GM12878 (cell line): ENCODE measurements at regions of chr17 and their contacts with region 1.

Region 1: GRCh38 chr17:47970704-47971463 is at the start of gene CDK5RAP3:
- DNase-seq: peak; percentile 97
- ATAC-seq: peak; percentile 98
- H3K4me3 ChIP-seq: peak within 1 kb of the TSS; percentile 92
- H3K27ac ChIP-seq: peak within 1 kb of the TSS; percentile 83
- H3K4me1 ChIP-seq: peaks cover 15% of the 10 kb centered on the region
- H3K27me3 ChIP-seq: no peaks in the 10 kb centered on the region
- CTCF ChIP-seq: peak; percentile 97 to 100 (median 99); a peak in 5 of 6 replicates
- EP300 ChIP-seq: no peak
- POLR2A ChIP-seq: peak; percentile 97
- RAD21 ChIP-seq: peak; percentile 45
- polyA plus RNA-seq, gene CDK5RAP3: 69.4 to 160 TPM

Region 2: DNA sequence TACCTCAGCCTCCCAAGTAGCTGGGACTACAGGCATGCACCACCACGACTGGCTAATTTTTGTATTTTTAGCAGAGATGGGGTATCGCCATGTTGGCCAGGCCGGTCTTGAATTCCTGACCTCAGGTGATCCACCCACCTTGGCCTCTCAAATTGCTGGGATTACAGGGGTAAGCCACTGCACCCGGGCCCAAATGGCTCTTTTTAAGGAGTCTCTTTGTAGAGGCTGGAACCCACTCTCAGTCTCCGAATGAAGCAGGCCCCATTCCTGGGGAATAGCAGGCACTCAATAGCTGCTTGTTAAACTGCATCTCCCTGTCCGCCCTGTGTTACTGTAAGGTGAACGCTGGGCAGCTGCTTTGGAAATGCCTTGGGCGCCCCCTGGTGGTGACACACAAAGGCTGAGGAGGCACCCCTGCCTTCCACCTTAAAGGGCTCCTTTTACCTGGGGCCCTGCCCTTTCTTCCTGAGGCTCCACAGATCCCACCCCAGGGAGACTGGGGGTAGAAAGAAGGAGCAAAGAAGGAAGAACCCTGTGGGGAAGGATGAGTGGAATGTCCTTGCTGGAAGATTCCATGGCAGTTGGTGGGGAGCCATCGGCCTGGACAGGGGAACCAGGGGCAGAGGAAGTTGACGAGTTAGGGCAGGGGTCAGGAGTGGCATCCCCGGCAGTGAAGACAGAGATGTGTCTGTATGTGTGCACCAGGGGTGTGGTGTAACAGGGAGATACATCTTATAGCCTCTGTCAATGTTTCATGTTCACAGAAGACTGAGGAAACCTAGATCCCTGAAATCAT is 81.0 kb before region 1 on chr17:
- CTCF ChIA-PET with region 1: interaction called, 14 read pairs
- POLR2A ChIA-PET with region 1: interaction called, 14 read pairs
- RAD21 ChIA-PET with region 1: interaction called, 19 read pairs
- SMC1A ChIA-PET with region 1: interaction called, 11 read pairs
- in situ Hi-C with region 1: no loop called
- intact Hi-C with region 1: loop called (anchors 1 kb)
- DNase-seq: no peak
- ATAC-seq: peak; percentile 99
- H3K4me3 ChIP-seq: no peak overlapping the region
- H3K27ac ChIP-seq: no peak overlapping the region
- H3K4me1 ChIP-seq: peaks cover 12% of the 10 kb centered on the region
- H3K27me3 ChIP-seq: no peaks in the 10 kb centered on the region
- CTCF ChIP-seq: peak; percentile 91 to 97 (median 96)
- EP300 ChIP-seq: no peak
- POLR2A ChIP-seq: no peak
- RAD21 ChIP-seq: peak; percentile 96

Region 3: GRCh38 chr17:47895856-47896671 is 74.8 kb before region 1 on chr17 and contains the start of gene SP2:
- CTCF ChIA-PET with region 1: interaction called, 14 read pairs
- POLR2A ChIA-PET with region 1: interaction called, 14 read pairs
- RAD21 ChIA-PET with region 1: interaction called, 19 read pairs
- SMC1A ChIA-PET with region 1: interaction called, 11 read pairs
- in situ Hi-C with region 1: no loop called
- intact Hi-C with region 1: loop called (anchors 1 kb)
- DNase-seq: peak; percentile 100
- ATAC-seq: peak; percentile 94
- H3K4me3 ChIP-seq: peak within 1 kb of the TSS; percentile 95
- H3K27ac ChIP-seq: peak within 1 kb of the TSS; percentile 92
- H3K4me1 ChIP-seq: peaks cover 16% of the 10 kb centered on the region
- H3K27me3 ChIP-seq: no peaks in the 10 kb centered on the region
- CTCF ChIP-seq: no peak; a peak in 2 of 6 replicates
- EP300 ChIP-seq: no peak
- POLR2A ChIP-seq: peak; percentile 80
- RAD21 ChIP-seq: no peak
- polyA plus RNA-seq, gene SP2: 1.2 to 1.9 TPM

Region 4: DNA sequence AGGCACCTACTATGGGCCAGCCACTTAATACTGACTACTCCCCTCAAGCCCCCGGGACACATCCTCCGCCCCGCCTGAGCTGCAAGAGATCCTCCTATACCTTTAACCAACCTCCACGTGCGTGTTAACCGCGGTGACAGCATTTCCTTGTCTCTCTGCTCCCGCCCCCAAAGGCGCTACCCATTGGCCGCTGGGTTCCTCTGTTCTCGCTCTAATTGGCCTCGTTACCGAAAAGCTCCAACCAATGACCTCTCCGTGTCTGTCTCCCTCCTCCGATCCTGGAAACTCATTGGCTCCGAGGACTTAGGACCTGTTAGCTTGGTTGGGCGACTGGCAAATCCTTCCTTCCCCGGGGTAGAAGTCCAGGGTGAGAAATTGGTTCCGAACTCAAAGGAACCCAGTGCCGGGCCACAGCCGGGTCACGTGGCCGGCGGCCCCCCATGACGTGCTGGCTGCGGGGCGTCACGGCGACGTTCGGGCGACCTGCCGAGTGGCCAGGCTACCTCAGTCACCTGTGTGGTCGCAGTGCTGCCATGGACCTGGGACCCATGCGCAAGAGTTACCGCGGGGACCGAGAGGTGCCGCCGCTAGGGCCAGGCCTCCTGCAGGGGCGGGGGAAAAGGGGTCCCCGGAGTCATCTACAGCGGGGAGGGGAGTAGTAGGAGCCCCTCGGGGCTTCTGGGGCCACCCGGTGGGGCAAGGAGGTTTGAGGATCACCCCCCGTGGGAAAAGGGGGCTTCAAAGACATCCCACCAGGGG is 29.5 kb before region 1 on chr17 and contains the start of gene PNPO:
- CTCF ChIA-PET with region 1: interaction called, 463 read pairs
- POLR2A ChIA-PET with region 1: interaction called, 55 read pairs
- RAD21 ChIA-PET with region 1: interaction called, 123 read pairs
- SMC1A ChIA-PET with region 1: interaction called, 139 read pairs
- in situ Hi-C with region 1: no loop called
- intact Hi-C with region 1: no loop called
- DNase-seq: peak; percentile 97
- ATAC-seq: peak; percentile 95
- H3K4me3 ChIP-seq: peak within 1 kb of the TSS; percentile 91
- H3K27ac ChIP-seq: peak within 1 kb of the TSS; percentile 86
- H3K4me1 ChIP-seq: peaks cover 48% of the 10 kb centered on the region
- H3K27me3 ChIP-seq: no peaks in the 10 kb centered on the region
- CTCF ChIP-seq: no peak
- EP300 ChIP-seq: 0 out of 4 replicates have a peak, but pooled peaks of 1 of the 2 experiments have one; percentile 12
- POLR2A ChIP-seq: peak; percentile 79
- RAD21 ChIP-seq: no peak
- polyA plus RNA-seq, gene PNPO: 13.9 to 32.3 TPM

Region 5: GRCh38 chr17:47957591-47958428 is 13.1 kb before region 1 on chr17 and contains the start of gene PRR15L:
- CTCF ChIA-PET with region 1: interaction called, 51 read pairs
- POLR2A ChIA-PET with region 1: interaction called, 39 read pairs
- RAD21 ChIA-PET with region 1: interaction called, 8 read pairs
- SMC1A ChIA-PET with region 1: interaction called, 139 read pairs
- in situ Hi-C with region 1: no loop called
- intact Hi-C with region 1: no loop called
- DNase-seq: no peak
- ATAC-seq: no peak
- H3K4me3 ChIP-seq: no peak within 1 kb of the TSS
- H3K27ac ChIP-seq: no peak within 1 kb of the TSS
- H3K4me1 ChIP-seq: no peaks in the 10 kb centered on the region
- H3K27me3 ChIP-seq: no peaks in the 10 kb centered on the region
- CTCF ChIP-seq: no peak
- EP300 ChIP-seq: no peak
- POLR2A ChIP-seq: no peak
- RAD21 ChIP-seq: no peak
- polyA plus RNA-seq, gene PRR15L: not detected

Region 6: GRCh38 chr17:48002266-48002915 is 31.5 kb after region 1 on chr17:
- CTCF ChIA-PET with region 1: interaction called, 47 read pairs
- POLR2A ChIA-PET with region 1: interaction called, 11 read pairs
- RAD21 ChIA-PET with region 1: interaction called, 8 read pairs
- SMC1A ChIA-PET with region 1: interaction called, 5 read pairs
- in situ Hi-C with region 1: no loop called
- intact Hi-C with region 1: no loop called
- DNase-seq: peak; percentile 75
- ATAC-seq: peak; percentile 85
- H3K4me3 ChIP-seq: no peak overlapping the region
- H3K27ac ChIP-seq: peak overlapping the region; percentile 85
- H3K4me1 ChIP-seq: peaks cover 49% of the 10 kb centered on the region
- H3K27me3 ChIP-seq: no peaks in the 10 kb centered on the region
- CTCF ChIP-seq: no peak
- EP300 ChIP-seq: peak; percentile 47 to 77; a peak in 2 of 4 replicates
- POLR2A ChIP-seq: no peak
- RAD21 ChIP-seq: no peak

Region 7: DNA sequence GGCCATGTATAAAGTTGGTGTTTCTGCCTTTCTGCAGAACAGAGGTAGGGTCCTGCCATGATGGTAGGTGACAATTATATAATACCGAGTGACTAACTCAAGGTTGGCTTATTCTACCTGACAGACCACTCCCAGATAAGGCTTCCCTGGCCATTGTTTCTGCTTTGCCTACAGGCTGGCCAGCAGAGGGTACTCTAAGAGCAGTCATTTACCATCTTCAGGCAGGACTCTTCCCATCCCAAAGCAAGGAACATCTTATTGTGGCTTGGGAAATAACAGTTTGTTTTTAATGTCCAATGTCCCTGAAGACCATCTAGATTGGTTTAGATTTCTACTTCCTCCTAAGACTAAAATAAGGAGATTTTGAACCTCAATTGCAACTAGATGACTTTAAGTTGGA is 210.8 kb after region 1 on chr17:
- CTCF ChIA-PET with region 1: no interaction called
- POLR2A ChIA-PET with region 1: no interaction called
- RAD21 ChIA-PET with region 1: no interaction called
- SMC1A ChIA-PET with region 1: no interaction called
- in situ Hi-C with region 1: no loop called
- intact Hi-C with region 1: no loop called
- DNase-seq: no peak
- ATAC-seq: no peak
- H3K4me3 ChIP-seq: no peak overlapping the region
- H3K27ac ChIP-seq: no peak overlapping the region
- H3K4me1 ChIP-seq: peaks cover 6% of the 10 kb centered on the region
- H3K27me3 ChIP-seq: no peaks in the 10 kb centered on the region
- CTCF ChIP-seq: peak in 2 of 3 experiments; percentile 28 to 31; a peak in 3 of 6 replicates
- EP300 ChIP-seq: no peak
- POLR2A ChIP-seq: no peak
- RAD21 ChIP-seq: no peak; the same call in 1 of the 2 replicates

Region 8: DNA sequence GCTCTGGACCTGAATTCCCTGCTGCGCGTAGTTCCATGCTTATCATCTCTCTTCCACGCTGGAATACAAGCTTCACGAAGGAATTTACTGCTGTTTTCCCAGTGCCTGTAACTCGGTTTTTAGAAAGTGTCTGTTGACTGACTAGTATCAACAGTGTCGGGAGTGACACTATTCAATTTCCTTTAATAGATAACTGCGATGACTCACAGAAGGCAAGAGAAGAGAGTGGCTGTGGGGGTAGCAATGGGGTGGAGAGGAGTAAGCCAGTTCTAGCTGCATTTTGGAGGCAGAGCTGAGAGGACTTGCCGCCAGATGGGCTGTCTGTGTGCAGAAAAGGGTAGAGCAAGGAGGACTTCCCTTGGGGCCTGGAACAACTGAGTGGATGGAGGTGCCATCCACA is 1186.9 kb after region 1 on chr17:
- CTCF ChIA-PET with region 1: no interaction called
- POLR2A ChIA-PET with region 1: no interaction called
- RAD21 ChIA-PET with region 1: no interaction called
- SMC1A ChIA-PET with region 1: no interaction called
- in situ Hi-C with region 1: no loop called
- intact Hi-C with region 1: no loop called
- DNase-seq: no peak
- ATAC-seq: no peak
- H3K4me3 ChIP-seq: no peak overlapping the region
- H3K27ac ChIP-seq: no peak overlapping the region
- H3K4me1 ChIP-seq: no peaks in the 10 kb centered on the region
- H3K27me3 ChIP-seq: peaks cover 0 to 2% of the 10 kb centered on the region in 2 experiments; a peak in 2 of 4 replicates
- CTCF ChIP-seq: no peak
- EP300 ChIP-seq: no peak
- POLR2A ChIP-seq: no peak
- RAD21 ChIP-seq: no peak